ENCODE measurements at regions of chr13 and their contacts with region 1.

Region 1: GRCh38 chr13:68697551-68697950 is 1410.1 kb upstream of the ATXN8OS start:
- DNase-seq: peak in 2 of 4 experiments; percentile 48 to 70
- ATAC-seq: peak; percentile 87
- H3K4me3 ChIP-seq: no peak overlapping the region
- H3K27ac ChIP-seq: peak overlapping the region; percentile 55; the same call in 2 of the 3 replicates
- H3K4me1 ChIP-seq: peaks cover 0 to 5% of the 10 kb centered on the region in 2 experiments; a peak in 2 of 5 replicates
- H3K27me3 ChIP-seq: no peaks in the 10 kb centered on the region
- CTCF ChIP-seq: no peak
- EP300 ChIP-seq: peak; percentile 7; the same call in 1 of the 2 replicates
- POLR2A ChIP-seq: no peak
- RAD21 ChIP-seq: no peak

Region 2: DNA sequence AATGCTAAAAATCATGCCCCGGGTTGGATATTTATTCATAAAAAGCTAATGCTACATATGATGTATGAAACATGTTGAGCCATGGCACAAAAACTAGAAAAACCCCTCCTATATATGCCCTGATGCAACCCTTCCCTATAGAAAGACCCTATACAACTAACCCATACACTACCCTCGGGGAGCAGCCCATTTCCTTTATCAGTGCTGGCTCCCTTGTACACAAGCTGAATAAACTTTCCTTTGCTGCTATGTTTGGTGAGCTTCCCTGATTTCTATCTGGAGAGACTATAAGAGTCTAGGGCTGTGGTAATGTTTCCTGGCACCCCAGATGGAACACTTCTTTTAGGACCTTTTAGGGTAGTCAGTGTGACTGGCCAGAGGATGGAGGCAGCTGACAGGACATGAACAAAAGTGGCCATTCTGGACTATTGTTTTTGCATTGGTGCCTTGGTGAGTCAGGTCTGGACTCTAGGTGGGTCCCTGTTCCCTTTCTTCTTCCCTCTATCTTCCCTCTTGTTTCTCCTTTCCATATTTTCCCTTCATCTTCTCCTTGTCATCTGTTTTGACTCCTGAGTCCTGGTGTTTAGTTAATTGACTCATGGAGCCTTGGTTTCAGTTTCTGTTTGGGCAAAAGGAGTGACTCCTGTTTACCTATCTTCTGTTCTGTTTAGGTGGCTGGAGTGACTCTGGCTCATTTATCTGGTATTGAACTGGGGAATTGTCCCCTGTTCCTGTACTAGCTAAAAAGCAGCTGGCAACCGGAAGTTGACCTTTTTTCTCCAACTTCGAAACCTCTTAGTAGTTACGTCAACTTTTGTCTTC is 145.6 kb before region 1 on chr13:
- CTCF ChIA-PET with region 1: no interaction called
- POLR2A ChIA-PET with region 1: no interaction called
- in situ Hi-C with region 1: no loop called
- intact Hi-C with region 1: no loop called
- DNase-seq: no peak
- ATAC-seq: peak; percentile 35; the same call in 2 of the 3 replicates
- H3K4me3 ChIP-seq: no peak overlapping the region
- H3K27ac ChIP-seq: no peak overlapping the region
- H3K4me1 ChIP-seq: no peaks in the 10 kb centered on the region
- H3K27me3 ChIP-seq: no peaks in the 10 kb centered on the region
- CTCF ChIP-seq: no peak
- EP300 ChIP-seq: no peak
- POLR2A ChIP-seq: no peak
- RAD21 ChIP-seq: peak in 1 of 2 experiments; percentile 8; a peak in 1 of 4 replicates

Region 3: DNA sequence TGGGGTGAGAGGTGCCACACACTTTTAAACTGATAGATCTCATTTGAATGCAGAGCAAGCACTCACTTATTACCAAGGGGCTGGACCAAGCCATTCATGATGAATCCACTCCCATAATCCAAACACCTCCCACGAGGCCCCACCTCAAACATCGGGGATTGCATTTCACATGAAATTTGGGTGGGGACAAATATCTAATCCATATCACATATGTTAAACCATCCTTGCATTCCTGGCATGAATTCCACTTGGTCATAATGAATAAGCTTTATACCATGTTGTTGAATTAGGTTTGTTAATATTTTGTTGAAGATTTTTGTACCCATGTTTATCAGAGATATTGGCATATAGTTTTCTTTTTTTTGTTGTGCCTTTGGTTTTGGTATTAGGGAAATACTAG is 211.3 kb after region 1 on chr13:
- CTCF ChIA-PET with region 1: no interaction called
- POLR2A ChIA-PET with region 1: no interaction called
- in situ Hi-C with region 1: no loop called
- intact Hi-C with region 1: loop called (anchors 5 kb)
- DNase-seq: no peak
- ATAC-seq: no peak
- H3K4me3 ChIP-seq: no peak overlapping the region
- H3K27ac ChIP-seq: no peak overlapping the region
- H3K4me1 ChIP-seq: no peaks in the 10 kb centered on the region
- H3K27me3 ChIP-seq: no peaks in the 10 kb centered on the region
- CTCF ChIP-seq: no peak
- EP300 ChIP-seq: no peak
- POLR2A ChIP-seq: no peak
- RAD21 ChIP-seq: no peak

Measured in K562 (cell line).